GM10248 (cell line): ENCODE measurements at regions of chr7 and their contacts with region 1.

Region 1: GRCh38 chr7:120554960-120555571 is 282.1 kb downstream of the KCND2 start:
- DNase-seq: peak; percentile 27
- CTCF ChIP-seq: peak; percentile 61

Region 2: DNA sequence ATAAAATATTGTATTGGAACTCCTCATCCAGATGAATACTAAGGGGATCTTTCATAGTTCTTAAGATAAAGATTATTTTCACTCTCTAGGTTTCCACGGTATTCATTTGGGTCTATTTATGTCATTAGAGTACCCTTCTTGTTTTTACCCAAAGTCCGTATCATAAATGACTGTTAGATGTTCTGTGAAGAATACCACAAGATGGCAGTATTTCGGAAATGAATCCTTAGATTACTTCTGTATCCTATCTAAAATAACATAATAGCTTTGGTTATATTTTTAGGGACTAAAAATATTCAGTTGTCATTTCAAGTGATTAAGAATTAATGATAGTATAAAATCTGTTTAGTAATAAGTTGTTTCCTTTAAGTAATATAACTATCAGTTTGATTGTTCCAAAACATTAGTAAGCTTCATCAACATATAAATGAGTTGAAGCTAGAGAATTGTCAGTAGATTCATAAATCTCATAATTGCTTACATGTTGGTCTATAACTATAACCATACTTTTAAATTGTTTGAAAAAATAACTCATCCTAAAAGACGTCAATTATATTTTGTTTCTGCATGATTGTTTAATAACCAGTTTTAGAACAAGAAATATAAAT is 619.5 kb before region 1 on chr7:
- CTCF ChIA-PET with region 1: interaction called, 10 read pairs
- POLR2A ChIA-PET with region 1: no interaction called
- DNase-seq: peak; percentile 11
- CTCF ChIP-seq: peak; percentile 32

Region 3: DNA sequence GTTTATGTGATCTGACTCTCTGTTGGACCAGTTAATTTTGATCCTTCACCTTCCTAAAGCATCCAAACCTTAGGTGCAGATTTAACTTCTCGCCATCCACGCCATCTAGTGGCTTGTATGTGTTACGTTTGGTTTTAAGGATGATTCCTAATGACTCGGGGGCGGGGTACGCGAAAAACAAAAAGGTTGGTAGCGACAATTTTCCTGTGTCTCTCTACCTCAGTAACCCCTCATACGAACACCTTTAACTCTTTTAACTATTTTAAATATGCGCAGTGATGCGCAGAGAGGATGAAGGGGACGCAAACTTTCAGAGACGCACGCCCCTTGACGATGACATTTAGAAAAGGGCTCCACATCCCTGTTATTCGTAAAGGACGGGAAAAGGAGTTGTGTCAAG is 282.8 kb before region 1 on chr7:
- CTCF ChIA-PET with region 1: interaction called, 14 read pairs
- POLR2A ChIA-PET with region 1: no interaction called
- DNase-seq: peak; percentile 71
- CTCF ChIP-seq: peak; percentile 70

Region 4: GRCh38 chr7:120539321-120539720 is 15.7 kb before region 1 on chr7:
- CTCF ChIA-PET with region 1: interaction called, 41 read pairs
- POLR2A ChIA-PET with region 1: no interaction called
- DNase-seq: no peak
- CTCF ChIP-seq: no peak

Region 5: DNA sequence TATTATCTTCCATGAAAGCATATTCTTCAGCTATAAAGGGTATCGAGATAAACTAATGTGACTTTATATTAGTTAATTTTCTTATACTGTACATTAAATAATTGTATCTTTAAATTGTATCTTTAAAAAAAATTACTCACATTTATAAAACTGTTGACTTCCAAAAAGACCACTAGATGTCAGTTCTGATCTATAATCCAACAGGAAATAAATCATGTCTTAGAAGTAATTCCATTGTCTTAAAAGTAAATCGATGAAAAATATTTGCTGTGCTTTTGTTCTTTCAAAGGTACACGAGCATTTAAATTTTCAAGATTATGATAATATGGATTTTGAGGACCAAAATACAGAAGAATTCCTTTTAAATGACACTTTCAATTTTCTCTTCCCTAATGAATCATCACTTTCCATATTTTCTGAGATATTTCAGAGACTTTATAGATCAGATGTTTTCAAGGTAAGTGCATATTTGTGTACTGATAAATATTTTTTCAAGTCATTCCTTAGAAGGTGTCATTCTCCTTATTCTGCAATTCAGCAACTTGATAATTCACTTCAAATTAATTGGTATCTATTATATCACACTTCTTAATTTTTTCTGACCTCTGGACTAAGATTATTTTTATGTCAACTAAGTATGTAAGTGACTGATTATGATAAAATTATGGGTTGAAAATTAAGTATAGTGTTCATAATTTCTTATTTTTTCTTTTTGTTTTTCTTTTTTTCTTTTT is 571.9 kb after region 1 on chr7:
- CTCF ChIA-PET with region 1: no interaction called
- POLR2A ChIA-PET with region 1: no interaction called
- DNase-seq: no peak
- CTCF ChIP-seq: no peak